A549 (cell line): ENCODE measurements at regions of chr1 and their contacts with region 1.

Region 1: GRCh38 chr1:224513787-224514209 is 79.2 kb upstream of the WDR26 start:
- DNase-seq: peak; percentile 76 to 90
- ATAC-seq: peak; percentile 99 to 100
- H3K4me3 ChIP-seq: no peak overlapping the region
- H3K27ac ChIP-seq: no peak overlapping the region
- H3K4me1 ChIP-seq: no peaks in the 10 kb centered on the region
- CTCF ChIP-seq: peak; percentile 96
- EP300 ChIP-seq: no peak
- POLR2A ChIP-seq: no peak
- RAD21 ChIP-seq: peak; percentile 94 to 95

Region 2: DNA sequence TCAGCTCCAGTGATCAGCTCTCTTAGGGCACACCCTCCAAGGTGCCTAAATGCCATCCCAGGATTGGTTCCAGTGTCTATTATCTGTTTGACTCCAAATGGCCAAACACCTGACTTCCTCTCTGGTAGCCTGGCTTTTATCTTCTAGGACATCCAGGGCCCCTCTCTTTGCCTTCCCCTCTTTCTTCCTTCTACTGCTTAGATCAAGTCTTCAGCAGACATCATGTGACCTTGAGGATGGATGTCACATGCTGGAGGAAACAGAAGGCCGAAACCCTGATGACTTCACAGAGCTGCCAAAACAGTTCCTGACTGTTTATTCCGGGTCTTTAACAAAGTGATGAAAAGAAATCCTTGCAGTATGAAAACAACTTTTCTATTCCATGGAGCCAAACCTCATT is 54.8 kb before region 1 on chr1:
- CTCF ChIA-PET with region 1: interaction called, 10 read pairs
- POLR2A ChIA-PET with region 1: no interaction called
- DNase-seq: no peak
- ATAC-seq: no peak
- H3K4me3 ChIP-seq: no peak overlapping the region
- H3K27ac ChIP-seq: no peak overlapping the region
- H3K4me1 ChIP-seq: peaks cover 9% of the 10 kb centered on the region
- CTCF ChIP-seq: no peak
- EP300 ChIP-seq: no peak
- POLR2A ChIP-seq: no peak
- RAD21 ChIP-seq: no peak

Region 3: GRCh38 chr1:224528900-224529299 is 15.1 kb after region 1 on chr1:
- CTCF ChIA-PET with region 1: interaction called, 55 read pairs
- POLR2A ChIA-PET with region 1: no interaction called
- DNase-seq: peak; percentile 20 to 23
- ATAC-seq: peak in 1 of 2 experiments; percentile 40; a peak in 2 of 6 replicates
- H3K4me3 ChIP-seq: no peak overlapping the region
- H3K27ac ChIP-seq: peak overlapping the region in 1 of 2 experiments; percentile 37; a peak in 1 of 6 replicates
- H3K4me1 ChIP-seq: peaks cover 7% of the 10 kb centered on the region; the same call in 2 of the 3 replicates
- CTCF ChIP-seq: no peak
- EP300 ChIP-seq: no peak
- POLR2A ChIP-seq: no peak
- RAD21 ChIP-seq: no peak

Region 4: DNA sequence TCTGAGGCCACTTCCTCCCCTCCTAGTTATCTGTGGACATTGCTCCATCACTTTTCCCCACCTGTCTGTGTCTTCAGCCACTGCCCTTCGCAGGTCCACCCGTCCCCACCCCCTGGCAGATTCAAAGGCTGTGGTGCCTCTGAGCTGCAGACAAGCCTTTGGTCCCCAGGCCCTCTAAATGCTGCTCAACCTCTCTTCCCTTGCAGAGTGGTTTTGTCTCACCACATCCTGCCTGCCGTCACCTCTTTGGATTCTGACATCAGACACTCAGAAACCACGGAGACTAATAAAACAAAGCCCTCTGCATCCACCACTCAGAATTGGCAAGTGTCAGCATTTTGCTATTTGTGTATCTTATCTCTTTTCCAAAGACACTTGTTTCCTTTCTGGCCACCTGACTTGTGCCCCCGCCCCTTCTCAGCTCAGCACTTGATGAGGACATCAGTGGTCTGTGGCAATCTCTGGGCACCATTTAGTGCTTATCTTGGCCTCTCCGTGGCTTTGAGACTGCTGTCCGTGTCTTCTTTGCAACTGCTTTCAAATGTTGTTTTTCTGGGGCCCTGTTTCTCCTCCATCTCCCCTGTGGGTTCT is 110.0 kb after region 1 on chr1:
- CTCF ChIA-PET with region 1: interaction called, 11 read pairs
- POLR2A ChIA-PET with region 1: no interaction called
- DNase-seq: no peak
- ATAC-seq: no peak
- H3K4me3 ChIP-seq: no peak overlapping the region
- H3K27ac ChIP-seq: no peak overlapping the region
- H3K4me1 ChIP-seq: no peaks in the 10 kb centered on the region; the same call in 2 of the 3 replicates
- CTCF ChIP-seq: no peak
- EP300 ChIP-seq: no peak
- POLR2A ChIP-seq: no peak
- RAD21 ChIP-seq: no peak

Region 5: DNA sequence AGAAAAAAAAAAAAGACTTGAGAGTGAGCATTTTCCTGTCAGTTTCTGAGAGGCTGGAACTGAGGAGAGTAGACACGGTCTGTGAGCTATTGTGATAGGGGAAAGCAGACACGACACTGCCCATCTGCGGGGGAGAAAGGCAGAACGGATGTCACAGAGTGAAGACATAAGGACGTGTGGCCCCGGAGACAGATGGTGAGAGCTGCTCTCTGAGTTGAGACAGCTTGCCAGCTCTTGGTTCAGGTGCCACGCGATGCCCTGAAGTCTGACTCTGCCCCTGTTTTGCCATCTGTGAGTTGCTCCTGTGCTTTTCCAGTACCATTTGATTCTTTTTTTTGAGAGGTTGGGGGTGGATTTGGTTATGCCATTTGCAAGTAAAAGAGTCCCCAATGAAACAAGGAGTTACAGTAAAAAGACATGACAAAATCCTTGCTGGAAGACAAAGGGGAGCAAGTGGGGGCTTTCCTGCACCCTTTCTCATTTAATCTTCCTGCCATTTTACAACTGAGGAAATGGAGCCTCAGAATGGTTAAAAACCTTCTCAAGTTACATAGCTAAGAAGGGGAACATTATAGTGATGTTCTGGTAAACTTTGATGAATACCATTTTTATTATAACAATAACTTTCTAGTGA is 286.8 kb after region 1 on chr1:
- CTCF ChIA-PET with region 1: no interaction called
- POLR2A ChIA-PET with region 1: no interaction called
- DNase-seq: no peak
- ATAC-seq: no peak
- H3K4me3 ChIP-seq: no peak overlapping the region
- H3K27ac ChIP-seq: no peak overlapping the region
- H3K4me1 ChIP-seq: no peaks in the 10 kb centered on the region
- CTCF ChIP-seq: no peak
- EP300 ChIP-seq: no peak
- POLR2A ChIP-seq: no peak
- RAD21 ChIP-seq: no peak

Region 6: DNA sequence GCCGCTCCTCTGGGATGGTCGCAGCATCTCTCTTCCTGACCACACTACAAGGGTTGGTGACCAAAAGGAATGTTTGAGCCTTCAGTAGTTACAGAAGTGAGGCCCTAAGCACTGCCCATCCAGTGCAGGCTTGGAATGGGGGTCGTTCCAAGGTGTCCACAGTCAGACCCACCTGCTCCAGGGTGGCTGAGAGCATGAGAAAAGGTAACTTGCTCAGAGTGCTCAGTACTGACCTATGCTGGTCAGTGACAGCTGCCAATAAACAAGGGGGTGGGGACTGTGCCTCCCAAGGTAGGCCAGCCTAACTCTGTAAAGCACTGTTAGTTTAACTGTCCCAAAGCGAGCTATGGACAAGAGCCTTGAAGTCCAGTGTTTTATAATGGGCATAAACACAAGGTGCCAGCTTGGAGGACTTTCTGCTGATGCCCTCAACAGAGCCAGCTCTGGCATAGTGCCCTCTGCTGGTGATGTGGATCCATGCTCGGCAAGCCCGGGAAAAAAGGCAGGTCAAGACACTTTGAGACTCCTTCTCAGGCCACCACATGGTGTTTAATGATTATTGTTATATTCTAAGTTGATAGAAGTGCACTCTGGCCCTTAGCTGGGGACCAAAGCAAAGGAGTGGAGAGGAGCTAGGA is 337.5 kb after region 1 on chr1:
- CTCF ChIA-PET with region 1: interaction called, 60 read pairs
- POLR2A ChIA-PET with region 1: no interaction called
- DNase-seq: peak; percentile 52 to 55
- ATAC-seq: peak; percentile 72 to 90
- H3K4me3 ChIP-seq: no peak overlapping the region
- H3K27ac ChIP-seq: no peak overlapping the region
- H3K4me1 ChIP-seq: no peaks in the 10 kb centered on the region
- CTCF ChIP-seq: peak; percentile 65
- EP300 ChIP-seq: no peak
- POLR2A ChIP-seq: no peak
- RAD21 ChIP-seq: peak; percentile 37 to 49; a peak in 4 of 5 replicates

Region 7: DNA sequence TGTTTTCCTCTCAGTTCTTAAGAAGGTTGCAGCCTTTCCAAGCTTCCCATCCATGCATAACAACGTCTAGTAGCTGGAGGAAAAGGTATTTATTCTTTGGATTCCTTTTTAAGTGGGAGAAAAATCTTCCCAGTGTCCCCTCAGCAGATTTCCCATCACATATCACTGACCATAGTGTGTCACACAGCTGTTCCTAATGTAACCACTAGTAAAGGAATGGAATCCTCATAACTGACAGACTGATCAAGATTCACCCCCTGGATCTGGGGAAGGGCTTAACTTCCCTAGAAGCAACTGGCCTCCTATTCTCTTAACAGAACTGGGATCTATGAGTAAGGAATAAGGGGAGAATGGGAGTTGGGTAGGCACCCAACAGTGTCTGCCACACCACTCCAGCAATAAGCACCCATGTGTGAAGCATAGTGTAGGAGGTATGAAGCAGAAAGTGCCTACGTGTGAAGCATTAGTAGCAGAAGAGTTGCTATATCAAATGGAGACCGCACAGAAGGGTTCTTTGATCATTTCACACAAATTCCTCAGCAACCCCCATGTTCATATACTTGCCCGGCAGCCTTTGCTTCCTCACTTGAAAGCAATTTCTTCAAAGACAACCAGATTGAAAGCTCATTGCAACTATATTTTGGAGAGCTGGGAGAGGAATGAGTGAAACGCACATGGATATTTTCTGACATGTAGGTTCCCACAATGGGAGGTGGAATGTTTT is 387.5 kb after region 1 on chr1:
- CTCF ChIA-PET with region 1: interaction called, 40 read pairs
- POLR2A ChIA-PET with region 1: no interaction called
- DNase-seq: no peak
- ATAC-seq: peak in 1 of 2 experiments; percentile 54; a peak in 1 of 6 replicates
- H3K4me3 ChIP-seq: no peak overlapping the region
- H3K27ac ChIP-seq: no peak overlapping the region
- H3K4me1 ChIP-seq: no peaks in the 10 kb centered on the region
- CTCF ChIP-seq: no peak
- EP300 ChIP-seq: no peak
- POLR2A ChIP-seq: no peak
- RAD21 ChIP-seq: no peak